Ovary (tissue), 10 donors: ENCODE measurements at regions of chr9 and their contacts with region 1.

Region 1: GRCh38 chr9:36991516-36992134 is 42.4 kb downstream of the PAX5 start:
- DNase-seq: no peak
- H3K4me3 ChIP-seq: no peak overlapping the region
- H3K27ac ChIP-seq: no peak overlapping the region
- H3K4me1 ChIP-seq: no peaks in the 10 kb centered on the region
- H3K27me3 ChIP-seq: no peaks in the 10 kb centered on the region
- CTCF ChIP-seq: no peak
- EP300 ChIP-seq: no peak
- POLR2A ChIP-seq: no peak

Region 2: DNA sequence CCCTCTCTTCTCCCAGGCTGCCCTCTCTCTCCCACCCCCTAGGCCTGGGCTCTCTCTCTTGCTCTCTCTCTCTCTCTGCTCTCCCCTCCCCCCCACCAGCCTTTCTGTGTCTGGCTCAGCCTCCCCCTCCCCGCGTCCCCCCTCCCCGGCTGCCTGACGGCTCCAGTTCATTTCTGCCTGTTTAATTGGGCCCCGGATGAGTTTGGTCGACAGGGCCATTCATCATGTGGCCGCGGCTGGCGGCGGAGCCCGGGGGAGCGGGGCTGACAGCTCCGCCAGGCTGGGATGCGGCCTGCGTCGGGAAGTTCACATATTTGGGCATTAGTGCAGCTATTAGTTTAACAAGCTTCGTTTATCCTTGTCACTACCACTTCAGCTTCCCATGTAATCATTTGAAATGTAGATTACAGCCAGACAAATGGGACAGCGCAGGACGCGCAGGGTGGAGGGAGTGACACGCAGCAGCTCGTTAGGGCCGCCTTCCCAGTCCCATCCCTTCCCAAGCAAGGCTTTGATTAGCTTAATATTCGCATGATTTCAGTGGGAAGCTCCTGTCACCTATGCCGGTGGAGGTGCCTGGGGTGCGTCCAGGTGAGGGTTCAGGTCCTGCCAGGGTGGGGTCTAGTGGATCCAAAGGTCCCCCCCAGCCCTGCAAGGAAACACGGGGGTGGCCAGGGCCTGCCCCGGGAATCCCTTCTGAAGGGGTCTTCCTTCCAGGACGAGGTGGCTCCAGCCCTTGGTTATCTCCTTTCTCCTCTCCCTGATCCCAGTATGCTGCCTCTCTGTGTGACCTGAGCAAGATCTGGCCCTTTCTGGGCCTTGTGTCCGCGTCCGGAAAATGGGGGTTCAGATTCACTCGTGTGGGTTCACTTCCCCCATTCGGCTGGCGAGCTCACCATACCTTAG is 172.4 kb before region 1 on chr9:
- intact Hi-C with region 1: no loop called
- DNase-seq: peak; percentile 37 to 50 (median 40)
- H3K4me3 ChIP-seq: no peak overlapping the region
- H3K27ac ChIP-seq: no peak overlapping the region
- H3K4me1 ChIP-seq: peaks cover 2% of the 10 kb centered on the region
- H3K27me3 ChIP-seq: no peaks in the 10 kb centered on the region
- CTCF ChIP-seq: no peak
- EP300 ChIP-seq: no peak
- POLR2A ChIP-seq: no peak

Region 3: DNA sequence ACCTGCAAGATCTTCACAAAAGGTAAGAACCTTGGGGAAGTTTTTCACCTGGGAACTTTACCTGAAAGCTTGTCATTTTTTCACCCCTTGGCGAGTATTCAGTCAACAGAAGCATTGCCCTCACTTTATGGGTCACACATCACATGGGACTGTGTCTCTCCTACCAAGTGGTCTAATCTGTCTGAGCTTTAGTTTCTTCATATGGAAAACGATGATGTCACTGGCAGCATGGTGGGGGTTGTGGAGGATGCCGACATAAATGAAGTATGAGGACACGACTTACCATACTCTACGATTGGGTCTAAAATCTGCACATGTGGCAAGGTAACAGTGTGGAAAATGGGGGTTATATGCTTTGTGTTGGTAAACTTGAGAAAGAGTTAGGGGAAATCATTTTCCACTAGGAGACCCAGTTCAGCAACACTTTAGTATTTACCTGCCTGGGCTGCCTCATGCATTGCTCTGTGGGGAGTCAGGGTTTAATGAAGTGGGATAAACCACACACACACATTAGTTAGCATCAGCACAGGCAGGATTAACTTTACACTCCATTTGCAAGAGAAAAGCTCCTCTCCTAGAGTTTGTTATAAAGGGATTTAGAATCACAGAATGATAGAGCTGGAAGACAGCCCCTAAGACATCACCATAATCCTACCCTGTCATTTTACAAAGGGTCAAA is 62.2 kb after region 1 on chr9:
- intact Hi-C with region 1: loop called in 1 of 4 experiments (anchors 5 kb)
- DNase-seq: no peak
- H3K4me3 ChIP-seq: no peak overlapping the region
- H3K27ac ChIP-seq: no peak overlapping the region
- H3K4me1 ChIP-seq: no peaks in the 10 kb centered on the region
- H3K27me3 ChIP-seq: no peaks in the 10 kb centered on the region
- CTCF ChIP-seq: no peak
- EP300 ChIP-seq: no peak
- POLR2A ChIP-seq: no peak

Region 4: GRCh38 chr9:37271679-37272078 is 280.1 kb after region 1 on chr9:
- intact Hi-C with region 1: no loop called
- DNase-seq: no peak
- H3K4me3 ChIP-seq: no peak overlapping the region
- H3K27ac ChIP-seq: no peak overlapping the region
- H3K4me1 ChIP-seq: no peaks in the 10 kb centered on the region
- H3K27me3 ChIP-seq: no peaks in the 10 kb centered on the region
- CTCF ChIP-seq: no peak
- EP300 ChIP-seq: no peak
- POLR2A ChIP-seq: no peak